WTC11 (cell line): ENCODE measurements at regions of chr1 and their contacts with region 1.

Region 1: DNA sequence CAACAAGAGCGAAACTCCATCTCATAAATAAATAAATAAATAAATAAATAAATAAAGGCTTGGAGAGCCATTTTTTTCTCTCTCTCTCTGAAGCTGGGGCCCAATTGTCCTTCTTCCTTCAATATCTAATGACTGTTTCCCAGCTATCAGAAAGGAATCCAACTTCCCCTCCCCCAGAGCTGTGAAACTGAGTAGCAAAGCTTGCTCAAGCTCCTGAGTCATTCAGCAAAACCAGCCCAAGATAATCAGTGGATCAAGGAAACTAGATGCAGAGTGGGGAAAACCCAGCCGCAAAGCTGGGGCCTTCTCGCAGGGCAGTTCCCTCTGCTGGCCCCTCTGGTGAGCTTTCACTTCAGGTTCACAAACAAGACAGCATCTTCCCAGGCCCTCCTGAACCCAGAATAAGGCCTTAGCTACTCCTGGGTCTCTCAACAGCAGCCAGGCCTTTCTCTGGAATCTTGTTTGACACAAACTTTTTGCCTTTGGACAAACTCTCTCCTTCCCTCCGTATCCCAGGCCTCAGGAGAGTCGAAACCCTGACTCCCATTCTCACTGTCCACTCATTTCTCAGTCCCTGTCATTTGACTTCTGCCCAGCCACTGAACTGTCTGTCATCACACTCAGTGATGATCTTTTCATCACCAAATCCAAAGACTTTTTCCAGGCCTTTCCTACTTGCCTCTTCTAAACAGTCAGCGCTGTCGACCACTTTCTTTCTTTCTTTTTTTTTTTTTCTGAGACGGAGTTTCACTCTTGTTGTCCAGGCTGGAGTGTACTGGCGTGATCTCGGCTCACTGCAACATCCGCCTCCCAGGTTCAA is 18.0 kb upstream of the PTP4A2 start:
- DNase-seq: peak; percentile 40
- ATAC-seq: peak; percentile 19
- H3K4me3 Mint-ChIP-seq: no peak overlapping the region
- H3K27ac Mint-ChIP-seq: peak overlapping the region; percentile 92
- H3K4me1 Mint-ChIP-seq: peaks cover 40% of the 10 kb centered on the region
- H3K27me3 Mint-ChIP-seq: peaks cover 2% of the 10 kb centered on the region; the same call in 1 of the 2 replicates
- CTCF ChIP-seq: no peak

Region 2: GRCh38 chr1:31938174-31938950 is 17.8 kb before region 1 on chr1 and contains the start of gene PTP4A2:
- CTCF ChIA-PET with region 1: interaction called, 39 read pairs
- POLR2A ChIA-PET with region 1: interaction called, 23 read pairs
- DNase-seq: peak; percentile 97
- ATAC-seq: peak; percentile 94
- H3K4me3 Mint-ChIP-seq: peak within 1 kb of the TSS; percentile 97
- H3K27ac Mint-ChIP-seq: peak within 1 kb of the TSS; percentile 55
- H3K4me1 Mint-ChIP-seq: peaks cover 53% of the 10 kb centered on the region
- H3K27me3 Mint-ChIP-seq: peaks cover 14% of the 10 kb centered on the region
- CTCF ChIP-seq: no peak
- total RNA-seq, gene PTP4A2: 147 to 172 TPM (median 150 TPM) in 3 replicates

Region 3: GRCh38 chr1:31944205-31945089 is 11.7 kb before region 1 on chr1:
- CTCF ChIA-PET with region 1: interaction called, 39 read pairs
- POLR2A ChIA-PET with region 1: interaction called, 23 read pairs
- DNase-seq: peak; percentile 96
- ATAC-seq: peak; percentile 95
- H3K4me3 Mint-ChIP-seq: peak overlapping the region; percentile 76
- H3K27ac Mint-ChIP-seq: peak overlapping the region; percentile 97
- H3K4me1 Mint-ChIP-seq: peaks cover 27% of the 10 kb centered on the region
- H3K27me3 Mint-ChIP-seq: peaks cover 5% of the 10 kb centered on the region
- CTCF ChIP-seq: no peak

Region 4: DNA sequence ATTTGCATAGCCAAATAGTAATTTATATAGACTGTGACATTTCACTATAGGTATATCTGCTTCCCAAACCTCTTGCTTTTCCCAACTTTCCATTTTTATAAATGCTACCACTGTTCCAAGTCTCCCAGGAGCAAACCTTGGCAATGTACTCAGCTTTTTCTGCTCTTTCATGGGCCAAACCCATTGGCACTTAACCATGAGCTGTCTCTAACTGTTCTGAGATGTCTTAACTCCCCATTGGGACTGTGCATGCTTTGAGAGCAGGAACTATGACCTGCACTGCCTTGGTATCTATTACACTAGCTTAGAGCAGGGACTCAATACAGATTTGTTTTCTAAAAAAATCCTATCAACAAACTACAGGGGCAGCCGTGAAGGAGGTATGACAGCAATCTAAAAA is 35.1 kb after region 1 on chr1:
- CTCF ChIA-PET with region 1: no interaction called
- POLR2A ChIA-PET with region 1: no interaction called
- DNase-seq: no peak
- ATAC-seq: no peak
- H3K4me3 Mint-ChIP-seq: no peak overlapping the region
- H3K27ac Mint-ChIP-seq: no peak overlapping the region
- H3K4me1 Mint-ChIP-seq: peaks cover 12% of the 10 kb centered on the region
- H3K27me3 Mint-ChIP-seq: no peaks in the 10 kb centered on the region
- CTCF ChIP-seq: no peak

Region 5: DNA sequence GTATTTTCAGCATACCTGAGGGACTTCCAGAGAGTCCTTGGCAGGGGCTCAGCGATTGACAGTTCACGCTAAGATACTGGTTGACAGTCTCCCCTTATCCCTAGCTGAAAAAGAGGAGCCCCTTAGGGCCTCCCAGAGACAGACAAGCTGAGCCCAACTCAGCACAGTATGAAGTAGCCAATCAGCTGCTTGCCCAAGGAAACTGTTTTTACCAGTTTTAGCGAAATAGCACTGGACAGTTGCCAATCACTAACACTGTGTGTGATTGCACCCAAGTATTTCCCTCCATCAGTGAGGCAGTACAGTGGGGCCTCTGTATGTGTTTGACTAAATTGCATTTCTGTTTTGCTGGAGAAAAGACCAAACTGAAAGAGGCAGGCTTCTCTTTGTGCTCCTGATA is 84.6 kb after region 1 on chr1:
- CTCF ChIA-PET with region 1: no interaction called
- POLR2A ChIA-PET with region 1: no interaction called
- DNase-seq: no peak
- ATAC-seq: no peak
- H3K4me3 Mint-ChIP-seq: no peak overlapping the region
- H3K27ac Mint-ChIP-seq: no peak overlapping the region
- H3K4me1 Mint-ChIP-seq: no peaks in the 10 kb centered on the region
- H3K27me3 Mint-ChIP-seq: no peaks in the 10 kb centered on the region
- CTCF ChIP-seq: no peak